AG04450 (cell line): ENCODE measurements at regions of chr6 and their contacts with region 1.

Region 1: DNA sequence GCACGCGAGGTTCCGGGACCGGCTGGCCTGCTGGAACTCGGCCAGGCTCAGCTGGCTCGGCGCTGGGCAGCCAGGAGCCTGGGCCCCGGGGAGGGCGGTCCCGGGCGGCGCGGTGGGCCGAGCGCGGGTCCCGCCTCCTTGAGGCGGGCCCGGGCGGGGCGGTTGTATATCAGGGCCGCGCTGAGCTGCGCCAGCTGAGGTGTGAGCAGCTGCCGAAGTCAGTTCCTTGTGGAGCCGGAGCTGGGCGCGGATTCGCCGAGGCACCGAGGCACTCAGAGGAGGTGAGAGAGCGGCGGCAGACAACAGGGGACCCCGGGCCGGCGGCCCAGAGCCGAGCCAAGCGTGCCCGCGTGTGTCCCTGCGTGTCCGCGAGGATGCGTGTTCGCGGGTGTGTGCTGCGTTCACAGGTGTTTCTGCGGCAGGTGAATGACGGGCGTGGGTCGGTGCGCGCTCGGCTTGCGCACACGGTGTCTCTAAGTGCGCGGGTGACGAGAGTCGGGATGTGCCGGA is at the start of gene CDKN1A:
- DNase-seq: peak; percentile 86
- H3K4me3 ChIP-seq: peak within 1 kb of the TSS; percentile 99
- H3K27ac ChIP-seq: peak within 1 kb of the TSS; percentile 96
- H3K27me3 ChIP-seq: no peaks in the 10 kb centered on the region
- CTCF ChIP-seq: no peak
- polyA plus RNA-seq, gene CDKN1A: 722 and 830 TPM in 2 replicates

Region 2: DNA sequence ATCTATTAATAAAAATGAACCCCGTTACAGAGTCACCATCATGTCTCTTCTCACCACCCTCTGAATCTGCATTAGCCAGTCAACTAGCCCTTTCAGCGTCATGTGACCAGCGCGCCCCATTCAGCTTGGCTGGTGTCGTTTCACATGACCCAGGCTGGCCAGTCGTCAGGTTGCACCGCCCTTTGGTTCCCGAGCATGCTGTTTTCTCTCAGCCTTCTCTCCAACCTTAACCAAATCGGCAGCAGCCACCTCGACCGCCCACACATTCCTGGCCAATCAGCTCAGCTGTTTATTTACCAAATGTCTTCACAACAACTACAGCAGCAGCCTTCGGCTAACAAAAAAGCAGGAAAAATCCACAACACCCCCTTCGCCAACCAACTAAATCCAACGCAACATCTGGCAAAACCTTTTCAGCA is 78.8 kb before region 1 on chr6:
- CTCF ChIA-PET with region 1: interaction called, 5 read pairs
- POLR2A ChIA-PET with region 1: interaction called, 10 read pairs
- DNase-seq: no peak
- H3K4me3 ChIP-seq: peak overlapping the region; percentile 26
- H3K27ac ChIP-seq: no peak overlapping the region
- H3K27me3 ChIP-seq: no peaks in the 10 kb centered on the region
- CTCF ChIP-seq: no peak

Region 3: DNA sequence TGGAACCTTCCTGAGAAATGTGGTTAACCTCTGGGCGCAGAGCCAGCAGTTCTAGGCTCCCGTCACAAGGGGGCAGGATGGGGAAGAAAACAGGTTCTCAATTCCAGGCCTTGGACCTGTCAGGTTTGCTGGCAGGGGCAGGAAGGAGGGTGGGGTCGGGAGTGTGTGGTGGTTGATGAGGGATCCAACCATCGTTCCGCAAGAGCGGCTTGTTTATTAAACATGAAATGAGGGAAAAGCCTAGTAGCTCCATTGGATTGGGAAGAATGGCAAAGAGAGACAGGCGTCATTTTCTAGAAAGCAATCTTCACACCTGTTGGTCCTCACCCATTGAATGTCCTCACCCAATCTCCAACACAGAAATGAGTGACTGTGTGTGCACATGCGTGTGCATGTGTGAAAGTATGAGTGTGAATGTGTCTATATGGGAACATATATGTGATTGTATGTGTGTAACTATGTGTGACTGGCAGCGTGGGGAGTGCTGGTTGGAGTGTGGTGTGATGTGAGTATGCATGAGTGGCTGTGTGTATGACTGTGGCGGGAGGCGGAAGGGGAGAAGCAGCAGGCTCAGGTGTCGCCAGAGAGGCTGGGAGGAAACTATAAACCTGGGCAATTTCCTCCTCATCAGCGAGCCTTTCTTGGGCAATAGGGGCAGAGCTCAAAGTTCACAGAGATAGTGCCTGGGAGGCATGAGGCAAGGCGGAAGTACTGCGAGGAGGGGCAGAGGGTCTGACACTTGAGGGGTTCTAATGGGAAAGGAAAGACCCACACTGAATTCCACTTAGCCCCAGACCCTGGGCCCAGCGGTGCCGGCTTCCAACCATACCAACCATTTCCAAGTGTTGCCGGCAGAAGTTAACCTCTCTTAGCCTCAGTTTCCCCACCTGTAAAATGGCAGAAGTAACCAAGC is 54.8 kb before region 1 on chr6:
- CTCF ChIA-PET with region 1: interaction called, 20 read pairs
- POLR2A ChIA-PET with region 1: interaction called, 37 read pairs
- DNase-seq: peak; percentile 56
- H3K4me3 ChIP-seq: no peak overlapping the region
- H3K27ac ChIP-seq: no peak overlapping the region
- H3K27me3 ChIP-seq: no peaks in the 10 kb centered on the region
- CTCF ChIP-seq: peak; percentile 90

Region 4: GRCh38 chr6:36643977-36644376 is 34.6 kb before region 1 on chr6:
- CTCF ChIA-PET with region 1: interaction called, 4 read pairs
- POLR2A ChIA-PET with region 1: interaction called, 16 read pairs
- DNase-seq: no peak
- H3K4me3 ChIP-seq: no peak overlapping the region
- H3K27ac ChIP-seq: no peak overlapping the region
- H3K27me3 ChIP-seq: no peaks in the 10 kb centered on the region
- CTCF ChIP-seq: no peak

Region 5: DNA sequence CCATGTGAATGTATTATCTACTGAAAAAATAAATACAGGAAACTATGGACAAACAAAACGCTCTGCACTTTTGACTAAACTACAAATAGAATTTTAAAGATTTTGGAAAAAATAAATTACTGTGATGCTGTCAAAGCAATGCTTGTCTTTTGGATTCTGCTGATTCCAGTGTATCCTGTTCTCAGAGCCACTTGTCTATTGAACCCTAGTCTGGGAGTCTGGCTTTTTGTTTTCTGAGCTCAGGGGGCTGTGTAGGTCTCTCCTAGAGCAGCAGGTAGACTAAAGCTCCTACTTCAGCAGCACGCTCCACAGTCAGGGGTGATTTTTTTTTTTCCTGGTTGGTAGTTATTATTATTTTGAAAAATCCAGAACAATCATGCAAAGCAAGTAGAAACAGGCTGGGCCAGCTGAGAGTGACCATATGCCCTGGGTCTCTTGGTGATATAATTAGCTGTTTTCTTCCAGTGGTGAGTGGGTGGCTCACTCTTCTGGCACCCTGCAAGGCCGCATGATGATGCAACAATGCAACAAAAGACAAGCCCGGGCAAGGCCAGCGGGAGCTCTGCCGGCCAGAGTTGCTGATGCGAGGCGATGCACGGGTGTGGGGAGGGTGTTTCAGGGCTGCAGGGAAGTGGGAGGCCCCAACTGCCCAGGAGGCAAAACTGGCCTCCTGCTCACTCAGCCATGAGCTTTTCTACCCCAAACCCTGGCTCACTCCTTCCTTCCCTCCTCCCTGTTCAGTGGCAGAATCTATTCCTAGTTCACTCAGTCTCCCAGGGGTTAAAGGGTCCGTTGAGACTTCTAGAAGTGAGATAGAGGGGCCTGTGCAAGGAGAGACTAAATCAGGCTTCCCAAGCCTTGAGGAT is 11.6 kb before region 1 on chr6:
- CTCF ChIA-PET with region 1: interaction called, 7 read pairs
- POLR2A ChIA-PET with region 1: interaction called, 95 read pairs
- DNase-seq: peak; percentile 89
- H3K4me3 ChIP-seq: 0 out of 2 replicates have a peak overlapping the region, but pooled peaks have one; percentile 13
- H3K27ac ChIP-seq: peak overlapping the region; percentile 97
- H3K27me3 ChIP-seq: no peaks in the 10 kb centered on the region
- CTCF ChIP-seq: no peak